MCF 10A (cell line): ENCODE measurements at regions of chrX and their contacts with region 1.

Region 1: DNA sequence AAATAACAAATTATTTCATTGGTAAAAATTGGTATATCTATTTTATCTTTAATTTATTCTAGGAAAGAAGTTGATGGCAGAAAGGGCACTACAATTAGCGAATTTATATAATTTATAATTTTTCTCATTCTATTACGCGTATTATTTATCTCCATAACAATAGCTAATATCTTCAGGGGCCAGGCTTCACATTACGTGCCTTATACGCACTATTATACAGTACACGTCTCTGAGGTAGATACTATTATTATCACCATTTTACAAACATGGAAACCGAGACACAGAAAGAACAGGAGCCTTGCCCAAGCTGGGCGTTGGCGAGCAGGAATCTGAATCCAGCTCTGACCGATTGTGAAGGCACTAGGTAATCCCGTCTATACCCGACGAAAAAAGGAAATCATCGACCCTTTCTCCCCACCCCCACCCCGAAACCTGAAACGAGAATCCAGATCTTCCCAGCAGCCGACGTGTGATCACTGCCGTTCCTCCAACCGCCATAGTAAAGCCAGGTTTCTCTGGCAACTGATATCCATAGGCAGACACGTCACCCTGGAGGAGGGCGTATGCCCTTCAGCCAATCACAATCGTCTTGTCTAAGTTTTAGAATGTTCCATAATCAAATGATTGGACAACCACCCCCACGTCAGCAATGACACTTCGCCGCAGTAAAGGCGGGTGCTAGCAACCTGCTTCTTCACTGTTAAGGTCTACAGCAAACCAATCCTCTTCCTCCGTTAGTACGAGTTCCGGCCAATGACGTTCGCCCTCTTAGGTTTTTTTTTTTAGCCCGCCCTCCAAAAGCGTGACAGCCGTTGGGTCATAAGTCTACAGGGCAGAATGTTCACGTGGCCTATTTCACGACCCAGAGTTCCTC is at the start of gene MORF4L2:
- DNase-seq: peak; percentile 96
- H3K4me3 Mint-ChIP-seq: no peak within 1 kb of the TSS
- H3K27ac Mint-ChIP-seq: no peak within 1 kb of the TSS
- H3K4me1 Mint-ChIP-seq: peaks cover 5% of the 10 kb centered on the region
- H3K27me3 Mint-ChIP-seq: peaks cover 11% of the 10 kb centered on the region
- CTCF ChIP-seq: no peak
- total RNA-seq, gene MORF4L2: 463 and 496 TPM in 2 replicates

Region 2: DNA sequence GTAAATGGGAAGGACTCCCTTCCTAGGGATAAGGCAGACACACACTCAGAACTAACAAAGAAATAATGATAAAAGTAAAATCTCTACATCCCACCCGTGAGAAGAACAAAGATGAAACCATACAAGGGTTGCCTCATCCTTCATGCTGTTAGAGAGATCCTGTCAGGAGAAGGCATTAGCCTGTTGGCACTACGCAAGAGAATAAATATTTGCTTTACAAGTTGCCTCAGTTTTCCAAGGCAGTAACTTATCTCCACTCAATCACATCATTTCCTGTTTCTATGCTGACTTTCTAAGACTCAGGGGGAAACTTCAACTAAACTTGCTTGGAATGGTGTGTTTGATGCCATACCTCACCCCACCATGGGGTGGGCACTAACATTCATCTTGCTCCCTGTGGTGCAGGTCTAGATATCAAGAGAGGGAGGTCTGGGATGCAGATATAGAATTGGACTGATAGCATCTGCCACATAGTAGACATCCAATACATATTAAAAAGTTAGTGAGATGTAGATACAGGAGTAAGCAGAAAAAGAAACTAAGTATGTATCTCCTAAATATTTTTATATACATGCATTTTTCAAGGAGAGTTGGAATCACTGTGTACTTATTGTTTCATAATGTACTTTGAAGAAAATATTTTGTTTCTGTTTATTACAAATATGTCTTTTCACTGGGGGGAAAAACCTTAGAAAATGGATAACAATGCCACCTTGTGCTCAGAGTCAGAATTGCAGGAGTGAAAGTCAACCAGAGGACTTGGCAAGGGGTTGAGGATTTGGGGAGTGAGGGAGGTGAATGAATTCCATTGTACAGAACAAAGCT is 528.7 kb before region 1 on chrX:
- CTCF ChIA-PET with region 1: no interaction called
- POLR2A ChIA-PET with region 1: no interaction called
- intact Hi-C with region 1: no loop called
- DNase-seq: peak; percentile 59
- H3K4me3 Mint-ChIP-seq: no peak overlapping the region
- H3K27ac Mint-ChIP-seq: no peak overlapping the region
- H3K4me1 Mint-ChIP-seq: peaks cover 15% of the 10 kb centered on the region
- H3K27me3 Mint-ChIP-seq: peaks cover 58% of the 10 kb centered on the region
- CTCF ChIP-seq: peak; percentile 81

Region 3: GRCh38 chrX:103362504-103362903 is 323.9 kb before region 1 on chrX:
- CTCF ChIA-PET with region 1: no interaction called
- POLR2A ChIA-PET with region 1: no interaction called
- intact Hi-C with region 1: no loop called
- DNase-seq: no peak
- H3K4me3 Mint-ChIP-seq: no peak overlapping the region
- H3K27ac Mint-ChIP-seq: peak overlapping the region; percentile 9
- H3K4me1 Mint-ChIP-seq: peaks cover 17% of the 10 kb centered on the region
- H3K27me3 Mint-ChIP-seq: peaks cover 58% of the 10 kb centered on the region
- CTCF ChIP-seq: no peak

Region 4: GRCh38 chrX:103540145-103540544 is 146.3 kb before region 1 on chrX:
- CTCF ChIA-PET with region 1: interaction called, 3 read pairs
- POLR2A ChIA-PET with region 1: interaction called, 15 read pairs
- intact Hi-C with region 1: no loop called
- DNase-seq: peak; percentile 26
- H3K4me3 Mint-ChIP-seq: no peak overlapping the region
- H3K27ac Mint-ChIP-seq: no peak overlapping the region
- H3K4me1 Mint-ChIP-seq: peaks cover 11% of the 10 kb centered on the region
- H3K27me3 Mint-ChIP-seq: peaks cover 55% of the 10 kb centered on the region
- CTCF ChIP-seq: no peak

Region 5: GRCh38 chrX:103629318-103630170 is 56.9 kb before region 1 on chrX:
- CTCF ChIA-PET with region 1: interaction called, 3 read pairs
- POLR2A ChIA-PET with region 1: interaction called, 9 read pairs
- intact Hi-C with region 1: loop called (anchors 2 kb)
- DNase-seq: peak; percentile 49
- H3K4me3 Mint-ChIP-seq: peak overlapping the region; percentile 84
- H3K27ac Mint-ChIP-seq: peak overlapping the region; percentile 84
- H3K4me1 Mint-ChIP-seq: peaks cover 13% of the 10 kb centered on the region
- H3K27me3 Mint-ChIP-seq: peaks cover 42% of the 10 kb centered on the region
- CTCF ChIP-seq: peak; percentile 28

Region 6: DNA sequence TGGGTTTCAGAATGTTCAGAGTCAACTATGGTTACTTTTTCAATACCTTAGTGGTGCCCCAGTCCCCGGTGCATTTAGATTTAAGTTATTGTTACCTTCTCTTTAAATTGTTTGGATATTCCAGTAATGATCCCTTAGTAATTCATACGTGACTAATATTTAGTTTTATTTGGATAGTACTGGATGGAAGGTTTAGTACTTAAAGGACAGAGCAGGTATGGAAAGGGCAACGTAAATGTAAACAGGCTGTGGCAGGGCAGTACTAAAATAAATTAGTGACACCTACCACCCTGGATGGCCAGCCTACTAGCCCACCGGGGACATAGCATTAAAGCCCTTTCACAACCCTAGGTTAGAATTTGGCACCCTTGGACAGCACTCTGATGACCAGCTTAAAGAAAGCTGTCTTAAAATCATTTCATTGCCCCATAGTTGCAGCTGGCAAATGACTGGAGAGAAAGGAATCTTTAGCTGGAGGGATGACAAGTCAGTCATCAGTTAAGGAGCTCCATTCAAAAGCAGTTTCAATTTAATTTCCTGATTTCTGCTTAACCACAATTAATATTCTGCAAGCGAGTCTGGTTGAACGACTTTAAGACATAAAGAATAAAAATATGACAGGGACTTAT is 106.6 kb after region 1 on chrX:
- CTCF ChIA-PET with region 1: no interaction called
- POLR2A ChIA-PET with region 1: no interaction called
- intact Hi-C with region 1: no loop called
- DNase-seq: peak; percentile 65
- H3K4me3 Mint-ChIP-seq: peak overlapping the region; percentile 49
- H3K27ac Mint-ChIP-seq: no peak overlapping the region
- H3K4me1 Mint-ChIP-seq: peaks cover 7% of the 10 kb centered on the region
- H3K27me3 Mint-ChIP-seq: peaks cover 55% of the 10 kb centered on the region
- CTCF ChIP-seq: no peak

Region 7: GRCh38 chrX:103817502-103817901 is 131.1 kb after region 1 on chrX:
- CTCF ChIA-PET with region 1: interaction called, 5 read pairs
- POLR2A ChIA-PET with region 1: no interaction called
- intact Hi-C with region 1: loop called (anchors 1 kb)
- DNase-seq: peak; percentile 66
- H3K4me3 Mint-ChIP-seq: no peak overlapping the region
- H3K27ac Mint-ChIP-seq: no peak overlapping the region
- H3K4me1 Mint-ChIP-seq: no peaks in the 10 kb centered on the region
- H3K27me3 Mint-ChIP-seq: peaks cover 36% of the 10 kb centered on the region
- CTCF ChIP-seq: peak; percentile 68

Region 8: GRCh38 chrX:103878466-103879122 is 192.2 kb after region 1 on chrX:
- CTCF ChIA-PET with region 1: no interaction called
- POLR2A ChIA-PET with region 1: no interaction called
- intact Hi-C with region 1: no loop called
- DNase-seq: peak; percentile 71
- H3K4me3 Mint-ChIP-seq: no peak overlapping the region
- H3K27ac Mint-ChIP-seq: peak overlapping the region; percentile 72
- H3K4me1 Mint-ChIP-seq: peaks cover 9% of the 10 kb centered on the region
- H3K27me3 Mint-ChIP-seq: peaks cover 61% of the 10 kb centered on the region
- CTCF ChIP-seq: no peak